Endothelial cell of umbilical vein (primary cell): ENCODE measurements at regions of chr3 and their contacts with region 1.

Region 1: DNA sequence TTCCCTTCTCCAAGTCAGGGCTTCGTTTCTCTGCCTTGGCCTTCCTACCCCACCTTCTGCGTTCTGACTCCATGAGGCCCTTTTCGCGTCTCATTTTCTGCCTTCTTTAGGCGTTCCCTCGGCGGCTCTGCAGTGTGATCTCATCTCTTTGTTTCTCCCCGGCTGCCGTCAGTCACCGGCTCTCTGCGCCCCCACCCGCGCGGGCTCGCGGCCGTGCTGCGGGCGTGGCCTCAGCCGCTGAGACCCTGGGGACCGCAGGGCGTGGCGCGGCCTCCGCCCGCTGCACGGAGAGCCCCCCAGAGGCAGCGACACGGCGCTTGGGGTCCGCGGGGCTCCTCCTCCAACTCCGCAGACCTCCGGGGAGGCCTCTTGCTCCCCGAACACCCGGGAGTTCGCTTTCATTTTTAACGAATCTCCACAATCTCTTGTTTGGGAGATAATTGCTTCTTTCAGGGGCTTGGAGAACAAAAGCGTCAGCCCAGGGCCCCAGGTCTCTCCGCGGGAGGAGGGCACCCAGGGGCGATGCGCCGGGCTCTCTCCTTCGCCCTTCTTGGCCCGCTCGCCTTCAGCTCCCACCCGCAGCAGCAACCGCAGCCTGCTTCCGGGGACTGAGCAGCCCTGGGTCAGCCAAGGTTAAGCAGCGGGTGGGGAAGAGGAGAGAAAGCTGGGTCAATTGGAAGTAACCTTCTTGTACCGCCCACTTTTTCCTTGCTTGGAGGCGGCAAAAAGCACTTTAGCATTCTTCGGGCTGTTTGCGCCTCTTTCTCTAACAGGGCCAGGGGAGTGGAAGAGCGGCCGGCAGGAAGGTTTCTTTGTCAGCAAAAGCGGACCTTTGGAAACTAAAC is 35.2 kb downstream of the GAP43 start:
- DNase-seq: peak; percentile 82
- H3K4me3 ChIP-seq: peak overlapping the region; percentile 74 to 91 (median 82)
- H3K27ac ChIP-seq: peak overlapping the region; percentile 80
- H3K4me1 ChIP-seq: peaks cover 12% of the 10 kb centered on the region
- H3K27me3 ChIP-seq: peaks cover 7 to 8% of the 10 kb centered on the region in 2 experiments
- CTCF ChIP-seq: no peak
- POLR2A ChIP-seq: peak; percentile 51

Region 2: GRCh38 chr3:114128231-114128630 is 1530.3 kb before region 1 on chr3:
- CTCF ChIA-PET with region 1: no interaction called
- POLR2A ChIA-PET with region 1: no interaction called
- dilution Hi-C with region 1: no loop called
- intact Hi-C with region 1: no loop called
- DNase-seq: peak; percentile 44
- H3K4me3 ChIP-seq: no peak overlapping the region
- H3K27ac ChIP-seq: no peak overlapping the region
- H3K4me1 ChIP-seq: peaks cover 7% of the 10 kb centered on the region
- H3K27me3 ChIP-seq: no peaks in the 10 kb centered on the region
- CTCF ChIP-seq: no peak
- POLR2A ChIP-seq: no peak

Region 3: GRCh38 chr3:114213627-114214541 is 1444.7 kb before region 1 on chr3:
- CTCF ChIA-PET with region 1: no interaction called
- POLR2A ChIA-PET with region 1: no interaction called
- dilution Hi-C with region 1: no loop called
- intact Hi-C with region 1: loop called (anchors 10 kb)
- DNase-seq: peak; percentile 82
- H3K4me3 ChIP-seq: peak overlapping the region in 2 of 3 experiments; percentile 27 to 29
- H3K27ac ChIP-seq: peak overlapping the region; percentile 70
- H3K4me1 ChIP-seq: peaks cover 47% of the 10 kb centered on the region
- H3K27me3 ChIP-seq: no peaks in the 10 kb centered on the region
- CTCF ChIP-seq: no peak
- POLR2A ChIP-seq: no peak

Region 4: GRCh38 chr3:115518100-115518852 is 140.3 kb before region 1 on chr3:
- CTCF ChIA-PET with region 1: no interaction called
- POLR2A ChIA-PET with region 1: no interaction called
- dilution Hi-C with region 1: no loop called
- intact Hi-C with region 1: loop called (anchors 2 kb)
- DNase-seq: peak; percentile 92
- H3K4me3 ChIP-seq: no peak overlapping the region
- H3K27ac ChIP-seq: peak overlapping the region; percentile 2
- H3K4me1 ChIP-seq: peaks cover 8% of the 10 kb centered on the region
- H3K27me3 ChIP-seq: peaks cover 0 to 1% of the 10 kb centered on the region in 2 experiments
- CTCF ChIP-seq: no peak
- POLR2A ChIP-seq: no peak